ENCODE measurements at regions of chr20 and their contacts with region 1.

Region 1: GRCh38 chr20:36613974-36614373 is 8.4 kb downstream of the RAB5IF start:
- DNase-seq: no peak
- ATAC-seq: no peak
- H3K4me3 Mint-ChIP-seq: no peak overlapping the region
- H3K27ac Mint-ChIP-seq: peak overlapping the region; percentile 39
- H3K4me1 Mint-ChIP-seq: peaks cover 3% of the 10 kb centered on the region
- H3K27me3 Mint-ChIP-seq: no peaks in the 10 kb centered on the region

Region 2: DNA sequence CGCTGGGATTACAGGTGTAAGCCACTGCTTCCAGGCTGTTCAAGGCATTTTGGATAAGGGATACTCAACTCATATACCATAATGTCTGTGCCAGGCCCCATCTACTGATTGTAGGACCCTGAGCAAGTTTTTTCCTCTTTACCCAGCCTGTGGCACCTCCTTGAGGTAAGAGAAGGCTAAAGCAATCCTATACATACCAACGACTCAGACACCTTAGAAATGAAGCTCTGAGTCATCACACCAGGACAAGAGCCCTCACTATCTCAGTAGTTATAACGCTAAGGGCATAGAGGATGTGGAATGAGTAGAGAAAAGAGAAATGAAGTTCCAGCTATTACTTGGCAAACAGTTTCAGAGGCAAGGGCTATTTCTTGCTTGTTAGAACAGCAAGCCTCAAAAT is 115.0 kb after region 1 on chr20:
- CTCF ChIA-PET with region 1: interaction called, 4 read pairs
- POLR2A ChIA-PET with region 1: no interaction called
- intact Hi-C with region 1: loop called in 1 of 2 experiments (anchors 1 kb)
- DNase-seq: peak; percentile 23
- ATAC-seq: peak; percentile 92
- H3K4me3 Mint-ChIP-seq: no peak overlapping the region
- H3K27ac Mint-ChIP-seq: no peak overlapping the region
- H3K4me1 Mint-ChIP-seq: peaks cover 29% of the 10 kb centered on the region
- H3K27me3 Mint-ChIP-seq: no peaks in the 10 kb centered on the region